ENCODE measurements at regions of chr2 and their contacts with region 1.

Region 1: GRCh38 chr2:177164584-177165052 is 48.0 kb upstream of the HNRNPA3 start:
- DNase-seq: peak; percentile 86 to 93
- ATAC-seq: peak; percentile 96
- H3K4me3 ChIP-seq: peak overlapping the region; percentile 22 to 71
- H3K27ac ChIP-seq: peak overlapping the region in 1 of 2 donors; percentile 93
- H3K4me1 ChIP-seq: peaks cover 0 to 5% of the 10 kb centered on the region in 2 donors
- H3K27me3 ChIP-seq: no peaks in the 10 kb centered on the region

Region 2: DNA sequence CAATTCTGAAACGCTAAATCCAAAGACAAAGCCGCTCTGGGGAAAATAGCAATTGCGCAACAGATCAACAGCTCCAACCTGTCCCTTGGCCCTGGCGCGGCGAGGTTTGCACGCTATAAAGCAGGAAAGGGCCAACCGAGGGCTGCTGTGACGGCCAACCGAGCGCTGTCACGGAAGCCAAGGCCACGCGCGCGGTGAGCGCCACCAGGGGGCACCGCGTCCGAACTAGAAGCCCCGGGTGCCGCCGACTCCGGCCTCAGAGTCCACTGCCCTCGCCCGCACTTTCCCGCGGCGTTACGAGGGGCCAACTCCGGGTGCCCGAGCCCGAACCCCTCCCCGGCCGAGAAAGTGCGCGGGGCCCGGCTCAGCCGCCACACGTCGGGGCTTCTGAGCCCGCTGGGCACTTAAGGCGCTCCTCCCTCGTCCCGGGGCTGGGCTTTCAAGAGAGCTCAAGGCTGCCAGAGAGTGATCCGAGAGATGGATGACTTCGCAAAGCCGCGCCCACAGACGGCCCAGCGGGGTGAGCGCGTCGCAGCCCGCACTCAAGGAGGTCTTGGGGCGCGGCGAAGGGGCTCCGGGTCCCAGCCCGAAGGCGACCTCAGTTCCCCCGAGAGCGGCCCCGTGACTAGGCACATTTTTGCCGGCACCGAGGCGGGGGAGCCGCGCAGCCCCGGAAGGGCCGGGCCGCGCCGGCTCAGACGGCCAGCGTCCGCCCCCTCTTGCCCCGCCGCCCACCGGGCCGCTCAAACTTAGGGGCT is 99.0 kb after region 1 on chr2:
- intact Hi-C with region 1: loop called (anchors 2 to 10 kb)
- DNase-seq: peak; percentile 99 to 100
- ATAC-seq: peak; percentile 94
- H3K4me3 ChIP-seq: peak overlapping the region; percentile 90 to 94
- H3K27ac ChIP-seq: peak overlapping the region; percentile 98 to 99
- H3K4me1 ChIP-seq: no peaks in the 10 kb centered on the region
- H3K27me3 ChIP-seq: no peaks in the 10 kb centered on the region

Region 3: GRCh38 chr2:177332041-177332991 is 167.7 kb after region 1 on chr2:
- intact Hi-C with region 1: loop called (anchors 2 kb)
- DNase-seq: peak in 1 of 2 donors; percentile 55
- ATAC-seq: peak; percentile 94
- H3K4me3 ChIP-seq: no peak overlapping the region
- H3K27ac ChIP-seq: peak overlapping the region in 1 of 2 donors; percentile 48
- H3K4me1 ChIP-seq: no peaks in the 10 kb centered on the region
- H3K27me3 ChIP-seq: no peaks in the 10 kb centered on the region

Region 4: GRCh38 chr2:177419274-177419673 is 254.7 kb after region 1 on chr2:
- intact Hi-C with region 1: loop called in 1 of 2 experiments (anchors 10 kb)
- DNase-seq: no peak
- ATAC-seq: no peak
- H3K4me3 ChIP-seq: no peak overlapping the region
- H3K27ac ChIP-seq: no peak overlapping the region
- H3K4me1 ChIP-seq: no peaks in the 10 kb centered on the region
- H3K27me3 ChIP-seq: no peaks in the 10 kb centered on the region

Region 5: DNA sequence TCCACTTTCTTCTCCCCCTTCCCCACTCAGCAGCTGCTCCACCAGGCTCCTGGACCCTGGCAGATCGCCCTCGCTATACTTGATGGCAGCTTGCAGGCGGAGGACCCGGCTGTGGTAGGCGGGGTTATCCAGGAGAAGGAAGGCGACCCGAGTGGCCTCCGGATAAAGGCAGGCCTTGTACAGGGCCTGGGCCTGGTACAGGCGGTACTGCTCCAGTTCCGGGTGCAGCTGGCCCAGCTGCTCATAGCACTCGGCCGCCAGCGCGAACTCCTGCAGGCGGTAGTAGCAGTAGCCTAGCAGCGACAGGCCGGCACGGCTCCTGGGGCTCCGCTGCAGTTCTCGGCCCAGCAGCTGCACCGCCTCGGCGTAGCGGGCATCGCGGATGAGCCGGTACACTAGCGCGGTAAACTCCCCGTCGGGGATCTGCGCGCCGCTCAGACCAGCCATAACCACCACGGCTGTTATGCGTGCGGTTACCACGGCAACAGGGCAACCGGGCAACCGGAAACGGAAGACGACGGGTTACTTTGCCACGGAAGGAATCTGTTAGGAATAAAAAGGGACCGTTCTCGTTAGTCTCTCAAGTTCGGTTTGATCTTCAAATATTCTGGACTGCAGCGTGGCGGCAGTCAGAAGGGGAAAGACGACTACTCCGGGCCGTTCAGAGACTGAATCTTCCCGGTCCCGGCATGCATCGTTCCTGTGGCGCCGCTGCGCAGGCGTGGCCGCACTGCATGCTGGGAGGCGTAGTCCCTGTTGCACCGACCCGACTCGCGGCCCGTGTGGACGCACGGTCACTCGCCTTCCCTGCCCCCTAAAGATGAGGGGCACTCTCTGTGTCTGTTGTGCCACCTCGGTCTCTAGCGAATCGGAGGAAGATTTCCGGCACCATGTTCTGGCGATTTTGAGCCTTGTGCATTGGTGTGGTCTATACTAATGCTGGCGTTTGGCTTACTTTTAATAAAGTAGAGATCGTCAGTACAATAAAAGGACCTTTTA is 453.9 kb after region 1 on chr2:
- intact Hi-C with region 1: loop called in 1 of 2 experiments (anchors 5 kb)
- DNase-seq: peak; percentile 96 to 97
- ATAC-seq: peak; percentile 98
- H3K4me3 ChIP-seq: peak overlapping the region; percentile 50 to 66
- H3K27ac ChIP-seq: peak overlapping the region in 1 of 2 donors; percentile 85
- H3K4me1 ChIP-seq: no peaks in the 10 kb centered on the region
- H3K27me3 ChIP-seq: no peaks in the 10 kb centered on the region

Measured in aorta (tissue), 5 donors.